Activated CD4-positive, alpha-beta memory T cell treated with anti-CD3 and anti-CD28 coated beads for 36 hours (primary cell): ENCODE measurements at regions of chr12 and their contacts with region 1.

Region 1: GRCh38 chr12:123200414-123200813 is 32.5 kb downstream of the MPHOSPH9 start:
- DNase-seq: peak; percentile 34
- H3K4me3 Mint-ChIP-seq: no peak overlapping the region
- H3K27ac Mint-ChIP-seq: peak overlapping the region; percentile 53
- H3K4me1 Mint-ChIP-seq: peaks cover 17% of the 10 kb centered on the region
- H3K27me3 Mint-ChIP-seq: no peaks in the 10 kb centered on the region

Region 2: GRCh38 chr12:123163227-123163626 is 37.2 kb before region 1 on chr12:
- CTCF ChIA-PET with region 1: no interaction called
- POLR2A ChIA-PET with region 1: no interaction called
- intact Hi-C with region 1: loop called (anchors 2 kb)
- DNase-seq: no peak
- H3K4me3 Mint-ChIP-seq: no peak overlapping the region
- H3K27ac Mint-ChIP-seq: no peak overlapping the region
- H3K4me1 Mint-ChIP-seq: peaks cover 8% of the 10 kb centered on the region
- H3K27me3 Mint-ChIP-seq: no peaks in the 10 kb centered on the region

Region 3: DNA sequence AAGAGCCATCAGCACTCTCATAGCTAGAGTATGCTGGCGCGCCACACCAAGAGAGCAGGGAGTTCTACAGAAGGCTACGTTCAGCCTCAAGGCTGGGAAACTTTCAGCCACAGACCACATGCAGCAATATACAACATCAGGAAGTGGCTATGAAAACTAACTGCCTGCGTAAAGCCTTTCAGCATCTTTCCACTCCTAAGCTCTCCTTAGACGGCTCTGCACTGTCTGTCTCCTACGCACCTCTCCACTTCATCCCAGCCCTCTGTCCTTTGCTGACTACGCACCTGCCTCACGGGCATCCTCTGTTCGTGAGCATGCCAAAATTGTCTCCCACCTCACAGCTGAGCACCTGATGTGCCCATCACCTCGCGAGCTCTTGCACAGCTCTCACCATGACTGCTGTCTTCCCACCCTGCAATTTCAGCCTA is 22.8 kb after region 1 on chr12:
- CTCF ChIA-PET with region 1: interaction called, 3 read pairs
- POLR2A ChIA-PET with region 1: no interaction called
- intact Hi-C with region 1: loop called (anchors 1 kb)
- DNase-seq: peak; percentile 79
- H3K4me3 Mint-ChIP-seq: peak overlapping the region; percentile 38
- H3K27ac Mint-ChIP-seq: peak overlapping the region; percentile 76
- H3K4me1 Mint-ChIP-seq: peaks cover 19% of the 10 kb centered on the region
- H3K27me3 Mint-ChIP-seq: no peaks in the 10 kb centered on the region

Region 4: GRCh38 chr12:123854918-123855317 is 654.5 kb after region 1 on chr12:
- CTCF ChIA-PET with region 1: no interaction called
- POLR2A ChIA-PET with region 1: no interaction called
- intact Hi-C with region 1: no loop called
- DNase-seq: no peak
- H3K4me3 Mint-ChIP-seq: no peak overlapping the region
- H3K27ac Mint-ChIP-seq: no peak overlapping the region
- H3K4me1 Mint-ChIP-seq: no peaks in the 10 kb centered on the region
- H3K27me3 Mint-ChIP-seq: peaks cover 5% of the 10 kb centered on the region

Region 5: GRCh38 chr12:124480469-124481256 is 1280.2 kb after region 1 on chr12:
- CTCF ChIA-PET with region 1: no interaction called
- POLR2A ChIA-PET with region 1: no interaction called
- intact Hi-C with region 1: no loop called
- DNase-seq: peak; percentile 77
- H3K4me3 Mint-ChIP-seq: no peak overlapping the region
- H3K27ac Mint-ChIP-seq: peak overlapping the region; percentile 28
- H3K4me1 Mint-ChIP-seq: peaks cover 40% of the 10 kb centered on the region
- H3K27me3 Mint-ChIP-seq: no peaks in the 10 kb centered on the region